ENCODE measurements at regions of chr13 and their contacts with region 1.

Region 1: DNA sequence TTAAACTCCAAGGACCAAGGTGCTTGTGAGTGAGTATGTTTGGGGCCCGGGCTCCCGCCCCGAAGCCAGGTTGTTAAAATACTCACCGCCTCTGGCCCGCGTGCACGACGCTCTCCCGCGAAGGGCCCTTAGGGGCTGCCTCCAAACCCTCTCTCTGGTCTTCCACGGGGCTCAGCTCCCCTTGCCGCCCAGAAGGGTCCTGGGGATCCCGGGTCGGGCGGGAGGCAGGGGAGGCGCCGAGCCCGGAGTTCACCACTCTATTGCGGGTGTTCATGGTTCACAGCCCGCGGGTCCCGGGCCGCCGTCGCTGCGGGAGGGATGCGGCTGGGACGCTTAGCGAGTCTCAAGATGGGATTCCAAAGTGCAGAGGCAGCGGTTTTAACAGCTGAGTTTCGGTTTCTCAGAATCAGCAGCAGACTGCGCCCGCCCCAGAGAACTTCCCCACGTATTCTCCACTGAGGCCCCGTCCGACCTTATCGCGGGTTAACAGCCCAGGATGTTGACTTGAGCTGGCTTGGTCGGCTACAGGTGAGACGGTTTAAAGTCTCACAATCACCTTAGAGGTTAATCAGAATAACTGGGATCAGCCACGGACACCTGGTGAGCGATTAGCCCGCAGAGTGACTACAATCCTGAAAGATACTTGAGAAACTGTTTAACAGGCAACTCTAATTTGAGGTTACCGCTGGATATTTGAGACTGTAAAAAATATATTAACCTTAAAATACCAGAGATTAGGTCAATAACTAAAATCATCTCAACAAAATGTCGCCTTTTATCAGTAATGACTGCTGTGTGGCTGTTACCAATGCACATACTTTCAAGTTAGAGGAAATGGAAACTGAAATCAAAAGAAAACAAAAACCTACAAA is at the start of gene EPSTI1:
- DNase-seq: peak; percentile 87
- ATAC-seq: peak; percentile 81
- H3K4me3 Mint-ChIP-seq: peak within 1 kb of the TSS; percentile 84
- H3K27ac Mint-ChIP-seq: peak within 1 kb of the TSS; percentile 99
- H3K4me1 Mint-ChIP-seq: peaks cover 45% of the 10 kb centered on the region
- H3K27me3 Mint-ChIP-seq: no peaks in the 10 kb centered on the region
- total RNA-seq, gene EPSTI1: 30.7 to 32.0 TPM

Region 2: DNA sequence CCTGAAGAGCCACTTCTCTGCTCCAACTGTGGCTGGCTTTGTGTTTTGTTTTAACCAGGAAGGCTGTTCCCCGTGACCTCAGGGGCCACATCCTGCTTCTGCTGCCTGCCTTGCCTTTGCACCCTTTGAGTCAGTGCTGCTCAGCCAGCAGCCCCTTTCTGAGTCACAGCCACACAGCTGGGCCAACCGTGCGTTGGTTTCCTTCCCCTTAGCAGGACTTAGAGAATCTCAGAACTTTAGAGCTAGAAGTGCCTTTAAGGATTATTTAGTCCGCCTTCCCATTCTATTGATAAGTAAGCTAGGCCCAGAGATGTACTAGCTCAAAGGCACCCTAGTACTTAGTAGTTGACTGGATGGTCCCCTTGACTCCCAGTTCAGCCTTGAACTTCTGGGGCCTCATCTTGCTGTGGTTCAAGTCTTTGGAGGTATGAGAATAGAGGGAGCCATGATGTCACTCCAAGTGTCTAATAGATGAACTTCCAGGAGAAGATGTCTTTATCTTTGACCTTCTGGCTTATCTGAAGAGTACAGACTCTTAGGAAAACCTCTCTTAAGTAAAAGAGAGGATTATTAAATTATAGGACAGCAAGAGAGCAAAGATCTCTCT is 1526.8 kb before region 1 on chr13:
- CTCF ChIA-PET with region 1: no interaction called
- POLR2A ChIA-PET with region 1: no interaction called
- intact Hi-C with region 1: loop called in 1 of 2 experiments (anchors 5 kb)
- DNase-seq: peak; percentile 95
- ATAC-seq: peak; percentile 84
- H3K4me3 Mint-ChIP-seq: peak overlapping the region; percentile 82
- H3K27ac Mint-ChIP-seq: peak overlapping the region; percentile 98
- H3K4me1 Mint-ChIP-seq: peaks cover 91% of the 10 kb centered on the region
- H3K27me3 Mint-ChIP-seq: no peaks in the 10 kb centered on the region

Region 3: DNA sequence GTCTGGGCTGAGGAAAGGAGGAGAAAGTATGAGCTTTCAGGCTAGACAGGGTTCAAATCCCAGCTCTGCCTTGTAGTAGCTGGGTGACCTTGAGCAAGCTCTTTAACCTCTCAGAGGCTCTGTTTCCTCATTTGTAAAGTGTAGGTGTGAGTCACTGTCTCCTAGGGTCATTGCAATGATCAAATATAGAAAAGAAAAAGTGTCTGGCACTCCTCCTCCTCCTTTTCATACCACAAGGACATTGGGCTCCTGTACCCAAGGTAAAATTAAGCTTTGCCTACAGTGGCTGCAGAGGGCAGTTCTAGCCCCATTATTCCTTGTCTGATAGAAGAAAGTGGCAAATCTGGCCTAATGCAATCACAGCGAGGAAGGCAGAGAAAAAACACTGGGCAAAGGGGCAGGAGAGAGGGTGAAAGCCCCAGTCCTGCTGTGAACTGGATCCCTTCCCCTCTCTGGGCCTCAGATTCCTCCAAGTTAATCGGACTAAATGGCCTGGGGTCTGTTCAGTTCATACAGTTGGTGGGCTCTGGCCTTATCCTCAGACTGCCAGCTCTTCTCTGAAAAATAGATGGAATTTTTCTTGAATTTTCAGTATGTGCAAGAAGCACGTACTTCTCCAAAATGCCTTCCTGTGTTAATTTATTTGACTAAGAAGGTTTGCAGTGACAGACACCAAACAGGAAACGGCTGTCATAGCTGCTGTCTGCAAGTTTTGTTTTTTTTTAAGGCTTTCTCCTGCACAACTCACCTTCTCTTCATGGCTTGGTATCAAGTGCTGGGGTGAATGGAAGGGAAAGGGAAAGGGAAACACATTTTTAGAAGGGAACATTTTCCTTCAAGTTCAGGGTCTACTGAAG is 1499.5 kb before region 1 on chr13:
- CTCF ChIA-PET with region 1: no interaction called
- POLR2A ChIA-PET with region 1: no interaction called
- intact Hi-C with region 1: no loop called
- DNase-seq: peak; percentile 44
- ATAC-seq: peak; percentile 76
- H3K4me3 Mint-ChIP-seq: peak overlapping the region; percentile 29
- H3K27ac Mint-ChIP-seq: peak overlapping the region; percentile 92
- H3K4me1 Mint-ChIP-seq: peaks cover 89% of the 10 kb centered on the region
- H3K27me3 Mint-ChIP-seq: no peaks in the 10 kb centered on the region

Region 4: GRCh38 chr13:42969558-42970172 is 22.5 kb before region 1 on chr13:
- CTCF ChIA-PET with region 1: interaction called, 9 read pairs
- POLR2A ChIA-PET with region 1: no interaction called
- intact Hi-C with region 1: loop called in 1 of 2 experiments (anchors 2 kb)
- DNase-seq: peak; percentile 90
- ATAC-seq: peak; percentile 79
- H3K4me3 Mint-ChIP-seq: no peak overlapping the region
- H3K27ac Mint-ChIP-seq: no peak overlapping the region
- H3K4me1 Mint-ChIP-seq: peaks cover 30% of the 10 kb centered on the region
- H3K27me3 Mint-ChIP-seq: no peaks in the 10 kb centered on the region

Region 5: GRCh38 chr13:43041369-43041921 is 49.3 kb after region 1 on chr13:
- CTCF ChIA-PET with region 1: interaction called, 3 read pairs
- POLR2A ChIA-PET with region 1: no interaction called
- intact Hi-C with region 1: loop called (anchors 1 kb)
- DNase-seq: no peak
- ATAC-seq: no peak
- H3K4me3 Mint-ChIP-seq: no peak overlapping the region
- H3K27ac Mint-ChIP-seq: peak overlapping the region; percentile 17
- H3K4me1 Mint-ChIP-seq: peaks cover 72% of the 10 kb centered on the region
- H3K27me3 Mint-ChIP-seq: no peaks in the 10 kb centered on the region

Region 6: DNA sequence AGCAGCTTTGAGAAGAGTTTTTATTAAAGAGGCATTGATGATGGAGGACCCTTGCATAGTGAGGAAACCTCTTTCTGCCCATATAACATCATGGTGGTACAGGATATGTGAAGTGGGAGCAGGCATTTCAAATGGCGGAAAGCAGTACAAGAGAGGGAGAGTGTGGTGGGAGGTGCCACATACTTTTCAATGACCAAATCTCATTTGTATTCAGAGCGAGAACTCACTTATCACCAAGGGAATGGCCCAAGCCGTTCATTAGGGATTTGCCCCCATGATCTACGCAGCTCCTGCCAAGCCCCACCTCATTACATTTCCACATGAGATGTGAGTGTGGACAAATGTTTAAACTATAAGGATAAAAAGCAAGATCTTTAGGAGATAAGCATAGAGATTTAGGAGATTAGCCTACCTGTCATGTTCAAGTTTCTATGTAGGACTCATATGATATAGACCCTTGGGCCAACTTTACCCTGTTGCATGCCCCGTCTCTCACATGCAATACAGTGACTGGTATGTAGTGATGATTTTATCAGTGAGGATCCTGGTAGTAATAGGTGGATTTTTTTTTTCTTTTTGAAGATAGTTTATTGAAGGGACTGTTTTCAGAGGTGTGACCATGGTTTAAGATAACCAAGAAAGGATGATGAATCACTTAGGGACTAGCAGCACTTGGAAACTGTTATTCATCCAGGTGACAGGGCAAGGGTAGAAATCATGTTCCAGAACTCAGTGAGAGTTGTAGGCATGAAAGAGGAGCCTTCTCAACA is 69.6 kb after region 1 on chr13:
- CTCF ChIA-PET with region 1: no interaction called
- POLR2A ChIA-PET with region 1: interaction called, 3 read pairs
- intact Hi-C with region 1: loop called in 1 of 2 experiments (anchors 1 kb)
- DNase-seq: peak; percentile 36
- ATAC-seq: peak; percentile 84
- H3K4me3 Mint-ChIP-seq: no peak overlapping the region
- H3K27ac Mint-ChIP-seq: peak overlapping the region; percentile 70
- H3K4me1 Mint-ChIP-seq: peaks cover 57% of the 10 kb centered on the region
- H3K27me3 Mint-ChIP-seq: no peaks in the 10 kb centered on the region